ENCODE measurements at regions of chr5 and their contacts with region 1.

Region 1: GRCh38 chr5:112146323-112147226 is 272.5 kb downstream of the EPB41L4A start:
- DNase-seq: peak in 1 of 2 donors; percentile 79
- ATAC-seq: peak; percentile 80 to 94 (median 88)
- H3K4me3 ChIP-seq: no peak overlapping the region
- H3K27ac ChIP-seq: peak overlapping the region in 6 of 10 donors; percentile 2 to 61 (median 34)
- H3K4me1 ChIP-seq: peaks cover 0 to 30% (median 24%) of the 10 kb centered on the region in 9 donors
- H3K27me3 ChIP-seq: no peaks in the 10 kb centered on the region
- CTCF ChIP-seq: peak; percentile 81 to 93 (median 89)

Region 2: GRCh38 chr5:111158105-111158744 is 988.4 kb before region 1 on chr5:
- intact Hi-C with region 1: loop called (anchors 2 to 10 kb)
- DNase-seq: peak in 1 of 2 donors; percentile 73
- ATAC-seq: peak in 4 of 8 donors; percentile 38 to 69 (median 64)
- H3K4me3 ChIP-seq: no peak overlapping the region
- H3K27ac ChIP-seq: no peak overlapping the region
- H3K4me1 ChIP-seq: no peaks in the 10 kb centered on the region
- H3K27me3 ChIP-seq: peaks cover 0 to 5% (median 0%) of the 10 kb centered on the region in 7 donors
- CTCF ChIP-seq: peak; percentile 95 to 100 (median 100)

Region 3: GRCh38 chr5:111550279-111551020 is 596.1 kb before region 1 on chr5:
- intact Hi-C with region 1: loop called (anchors 1 to 5 kb)
- DNase-seq: peak; percentile 23 to 95
- ATAC-seq: peak; percentile 90 to 95 (median 92)
- H3K4me3 ChIP-seq: peak overlapping the region in 2 of 10 donors; percentile 1 to 21
- H3K27ac ChIP-seq: peak overlapping the region; percentile 11 to 85 (median 72)
- H3K4me1 ChIP-seq: peaks cover 2 to 38% (median 22%) of the 10 kb centered on the region in 9 donors
- H3K27me3 ChIP-seq: no peaks in the 10 kb centered on the region
- CTCF ChIP-seq: peak; percentile 52 to 84 (median 70)

Region 4: GRCh38 chr5:111757355-111758283 is 389.0 kb before region 1 on chr5:
- intact Hi-C with region 1: loop called in 9 of 10 experiments (anchors 2 to 10 kb)
- DNase-seq: peak; percentile 97
- ATAC-seq: peak; percentile 89 to 96 (median 90)
- H3K4me3 ChIP-seq: peak overlapping the region; percentile 19 to 78 (median 70)
- H3K27ac ChIP-seq: peak overlapping the region; percentile 85 to 97 (median 92)
- H3K4me1 ChIP-seq: peaks cover 0 to 42% (median 29%) of the 10 kb centered on the region in 9 donors
- H3K27me3 ChIP-seq: no peaks in the 10 kb centered on the region
- CTCF ChIP-seq: peak in 6 of 9 donors; percentile 20 to 45 (median 34)

Region 5: DNA sequence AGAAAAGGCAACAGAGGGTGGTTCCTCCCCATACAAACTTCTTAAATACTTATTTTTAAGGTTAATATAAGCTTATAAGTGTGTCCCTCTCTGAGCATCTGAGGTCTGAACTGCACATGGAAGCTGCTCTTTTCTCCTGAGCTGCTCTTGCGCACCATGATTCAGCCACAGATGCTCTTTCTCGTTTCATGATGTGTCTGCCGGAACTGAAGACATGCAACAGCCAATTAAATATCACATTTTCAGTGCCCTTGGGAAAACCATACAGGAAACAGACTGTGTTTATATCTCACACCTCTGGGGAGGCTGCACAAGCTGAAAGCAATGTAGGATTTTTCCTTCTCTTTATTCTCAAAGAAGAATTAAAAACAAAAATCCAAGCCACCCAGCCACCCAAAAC is 292.8 kb before region 1 on chr5:
- intact Hi-C with region 1: loop called in 3 of 10 experiments (anchors 10 kb)
- DNase-seq: peak in 1 of 2 donors; percentile 18
- ATAC-seq: peak in 6 of 8 donors; percentile 40 to 67 (median 58)
- H3K4me3 ChIP-seq: no peak overlapping the region
- H3K27ac ChIP-seq: no peak overlapping the region
- H3K4me1 ChIP-seq: peaks cover 0 to 35% (median 7%) of the 10 kb centered on the region in 9 donors
- H3K27me3 ChIP-seq: no peaks in the 10 kb centered on the region
- CTCF ChIP-seq: no peak

Region 6: DNA sequence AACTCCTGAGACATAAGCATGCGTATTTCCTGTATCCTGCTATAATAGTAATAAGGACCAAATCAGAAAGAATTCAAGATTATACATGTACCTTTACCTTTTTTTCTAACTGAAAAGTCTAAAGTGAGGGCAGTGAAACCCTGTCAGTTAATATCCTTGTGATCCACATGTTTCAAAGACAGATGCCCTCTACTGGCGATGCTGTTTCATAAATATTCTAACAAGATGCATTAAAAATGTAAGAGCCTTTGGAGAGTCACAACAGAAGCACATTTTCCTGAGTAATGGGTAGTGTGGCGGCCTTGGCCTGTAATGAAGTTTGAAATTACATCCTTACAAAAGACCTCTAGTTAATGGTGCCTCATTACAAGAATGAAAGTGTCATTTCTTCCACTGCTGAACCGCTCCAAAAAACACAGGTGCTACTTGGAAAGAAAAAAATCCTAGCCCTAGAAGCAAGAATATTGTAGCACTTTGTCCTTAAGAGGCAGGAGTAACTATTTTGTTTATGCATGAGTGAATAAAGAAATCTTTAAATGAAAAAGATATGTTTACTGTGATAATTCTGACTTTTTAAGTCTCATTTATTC is 39.9 kb after region 1 on chr5:
- intact Hi-C with region 1: no loop called
- DNase-seq: no peak
- ATAC-seq: peak in 1 of 8 donors; percentile 56
- H3K4me3 ChIP-seq: no peak overlapping the region
- H3K27ac ChIP-seq: no peak overlapping the region
- H3K4me1 ChIP-seq: no peaks in the 10 kb centered on the region
- H3K27me3 ChIP-seq: no peaks in the 10 kb centered on the region
- CTCF ChIP-seq: peak; percentile 16 to 66 (median 55)

Measured in heart right ventricle (tissue), 16 donors.